Psoas muscle (tissue), 8 donors: ENCODE measurements at regions of chr12 and their contacts with region 1.

Region 1: DNA sequence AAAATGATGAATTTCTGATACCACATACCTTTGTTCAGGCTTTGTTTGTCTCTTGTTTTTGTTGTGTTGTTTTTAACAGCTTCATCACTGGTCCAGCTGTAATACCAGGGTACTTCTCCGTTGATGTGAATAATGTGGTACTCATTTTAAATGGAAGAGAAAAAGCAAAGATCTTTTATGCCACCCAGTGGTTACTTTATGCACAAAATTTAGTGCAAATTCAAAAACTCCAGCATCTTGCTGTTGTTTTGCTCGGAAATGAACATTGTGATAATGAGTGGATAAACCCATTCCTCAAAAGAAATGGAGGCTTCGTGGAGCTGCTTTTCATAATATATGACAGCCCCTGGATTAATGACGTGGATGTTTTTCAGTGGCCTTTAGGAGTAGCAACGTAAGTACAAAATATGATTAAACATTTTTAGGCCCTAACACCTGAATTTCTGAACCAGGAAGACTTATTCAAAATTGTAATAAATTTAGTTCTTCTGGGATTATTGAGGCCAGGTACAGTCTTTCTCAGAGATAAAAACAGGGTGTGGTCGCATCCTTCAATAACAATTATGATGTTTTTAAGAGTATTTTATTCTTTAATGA is 22.4 kb downstream of the RXYLT1 start:
- DNase-seq: no peak
- ATAC-seq: no peak
- H3K4me3 ChIP-seq: no peak overlapping the region
- H3K27ac ChIP-seq: no peak overlapping the region
- H3K4me1 ChIP-seq: no peaks in the 10 kb centered on the region
- H3K27me3 ChIP-seq: no peaks in the 10 kb centered on the region
- CTCF ChIP-seq: peak; percentile 53

Region 2: DNA sequence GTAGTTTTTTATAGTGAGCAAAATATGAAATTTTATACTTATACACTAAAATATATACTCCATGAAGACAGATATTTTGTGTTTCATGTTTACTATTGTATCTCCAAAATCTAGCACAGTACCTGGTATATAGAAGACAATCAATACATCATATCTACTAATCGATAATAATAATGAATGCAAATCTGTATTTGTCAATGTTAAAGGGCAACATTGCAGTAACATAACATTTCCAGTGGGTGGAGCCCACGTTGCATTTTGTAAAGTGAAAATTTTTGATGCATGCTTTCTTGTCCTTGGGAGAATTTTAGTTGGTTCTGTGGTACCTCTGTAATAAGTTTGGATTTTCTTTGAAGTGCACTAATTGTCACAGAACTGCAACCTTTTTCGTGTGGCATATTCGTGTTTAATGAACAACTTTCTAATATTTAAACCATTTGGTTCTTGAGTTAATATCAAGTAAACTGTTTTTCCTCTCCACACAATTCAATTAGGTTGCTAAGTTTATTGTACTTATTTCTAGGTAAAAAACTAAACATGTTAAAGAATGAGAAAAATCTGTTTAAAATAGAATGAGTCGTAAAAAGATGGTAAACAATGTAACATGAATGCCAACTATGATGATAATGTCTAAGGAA is 698.5 kb before region 1 on chr12:
- intact Hi-C with region 1: loop called (anchors 10 kb)
- DNase-seq: no peak
- ATAC-seq: no peak
- H3K4me3 ChIP-seq: no peak overlapping the region
- H3K27ac ChIP-seq: no peak overlapping the region
- H3K4me1 ChIP-seq: no peaks in the 10 kb centered on the region
- H3K27me3 ChIP-seq: no peaks in the 10 kb centered on the region
- CTCF ChIP-seq: peak; percentile 64

Region 3: GRCh38 chr12:63668028-63668799 is 133.9 kb before region 1 on chr12 and contains the start of gene DPY19L2:
- intact Hi-C with region 1: loop called in 1 of 2 experiments (anchors 10 kb)
- DNase-seq: peak; percentile 54 to 79
- ATAC-seq: peak; percentile 39 to 90 (median 77)
- H3K4me3 ChIP-seq: peak within 1 kb of the TSS; percentile 66
- H3K27ac ChIP-seq: peak within 1 kb of the TSS; percentile 10
- H3K4me1 ChIP-seq: no peaks in the 10 kb centered on the region
- H3K27me3 ChIP-seq: no peaks in the 10 kb centered on the region
- CTCF ChIP-seq: no peak
- total RNA-seq, gene DPY19L2: 0.32 to 2.0 (median 0.50) TPM

Region 4: GRCh38 chr12:63826006-63826585 is 24.0 kb after region 1 on chr12:
- intact Hi-C with region 1: no loop called
- DNase-seq: no peak
- ATAC-seq: peak in 3 of 4 donors; percentile 37 to 69 (median 68)
- H3K4me3 ChIP-seq: no peak overlapping the region
- H3K27ac ChIP-seq: no peak overlapping the region
- H3K4me1 ChIP-seq: no peaks in the 10 kb centered on the region
- H3K27me3 ChIP-seq: peaks cover 0 to 7% (median 2%) of the 10 kb centered on the region in 3 donors
- CTCF ChIP-seq: peak; percentile 70

Region 5: GRCh38 chr12:63882844-63883243 is 80.7 kb after region 1 on chr12:
- intact Hi-C with region 1: no loop called
- DNase-seq: no peak
- ATAC-seq: peak in 3 of 4 donors; percentile 82 to 90 (median 88)
- H3K4me3 ChIP-seq: no peak overlapping the region
- H3K27ac ChIP-seq: peak overlapping the region; percentile 3
- H3K4me1 ChIP-seq: no peaks in the 10 kb centered on the region
- H3K27me3 ChIP-seq: no peaks in the 10 kb centered on the region
- CTCF ChIP-seq: no peak